ENCODE measurements at regions of chr1 and their contacts with region 1.

Region 1: GRCh38 chr1:205255941-205256780 is 28.4 kb downstream of the TMCC2 start:
- DNase-seq: peak; percentile 91
- H3K4me3 Mint-ChIP-seq: no peak overlapping the region
- H3K27ac Mint-ChIP-seq: no peak overlapping the region
- H3K4me1 Mint-ChIP-seq: no peaks in the 10 kb centered on the region
- H3K27me3 Mint-ChIP-seq: peaks cover 10% of the 10 kb centered on the region

Region 2: GRCh38 chr1:204915861-204916495 is 340.2 kb before region 1 on chr1:
- CTCF ChIA-PET with region 1: no interaction called
- DNase-seq: no peak
- H3K4me3 Mint-ChIP-seq: no peak overlapping the region
- H3K27ac Mint-ChIP-seq: no peak overlapping the region
- H3K4me1 Mint-ChIP-seq: no peaks in the 10 kb centered on the region
- H3K27me3 Mint-ChIP-seq: peaks cover 18% of the 10 kb centered on the region

Region 3: DNA sequence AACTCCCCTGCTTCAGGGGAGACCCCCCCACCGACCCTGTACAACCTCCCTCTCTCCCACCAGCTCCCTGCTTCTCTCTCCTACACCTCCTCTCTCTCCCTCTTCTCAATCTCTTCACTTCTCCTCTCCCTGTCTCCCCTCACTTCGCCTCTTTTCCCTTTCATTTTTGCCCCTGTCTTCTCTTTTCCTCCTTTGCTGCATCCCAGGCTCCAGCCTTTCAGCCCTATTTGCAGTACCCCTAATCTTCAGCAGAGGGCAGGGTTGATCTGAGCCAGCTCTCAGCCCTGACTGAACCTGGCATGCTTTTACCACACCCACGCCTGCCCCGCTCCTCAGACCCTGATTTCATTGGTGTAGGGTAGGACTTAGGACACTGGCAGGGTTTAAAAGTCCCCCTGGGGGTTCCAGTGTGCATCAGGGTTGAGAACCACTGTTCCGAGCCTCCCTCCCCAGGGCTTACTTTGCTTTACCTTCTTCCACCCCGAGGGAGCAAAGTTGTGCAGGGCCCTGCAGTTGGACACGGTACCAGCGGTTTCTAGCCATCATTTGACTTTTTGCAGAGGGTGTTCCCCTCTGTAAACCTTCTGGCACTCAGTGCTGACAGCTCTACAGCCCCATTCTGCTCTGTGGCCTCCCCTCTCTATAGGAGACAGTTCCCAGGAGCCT is 280.5 kb before region 1 on chr1:
- CTCF ChIA-PET with region 1: interaction called, 50 read pairs
- DNase-seq: peak; percentile 64
- H3K4me3 Mint-ChIP-seq: no peak overlapping the region
- H3K27ac Mint-ChIP-seq: no peak overlapping the region
- H3K4me1 Mint-ChIP-seq: no peaks in the 10 kb centered on the region
- H3K27me3 Mint-ChIP-seq: peaks cover 62% of the 10 kb centered on the region

Region 4: DNA sequence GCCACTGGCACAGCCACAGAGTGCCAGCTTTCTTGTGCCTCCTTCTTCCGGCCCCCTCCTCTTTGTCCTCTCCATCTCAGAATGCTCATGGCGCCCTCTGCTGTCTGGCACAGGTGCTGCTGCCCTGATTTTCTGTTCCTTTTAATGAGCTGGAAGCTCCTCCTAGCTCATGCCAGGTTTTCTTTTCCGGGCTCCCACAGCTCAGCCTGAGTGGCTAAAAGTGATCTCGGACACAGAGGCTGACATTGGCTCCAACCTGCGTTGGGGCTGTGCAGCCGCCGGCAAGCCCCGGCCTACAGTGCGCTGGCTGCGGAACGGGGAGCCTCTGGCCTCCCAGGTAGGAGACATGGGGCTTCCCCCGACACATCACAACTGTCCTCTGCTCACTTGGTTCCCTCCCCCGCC is 194.5 kb before region 1 on chr1:
- CTCF ChIA-PET with region 1: interaction called, 56 read pairs
- DNase-seq: peak; percentile 88
- H3K4me3 Mint-ChIP-seq: no peak overlapping the region
- H3K27ac Mint-ChIP-seq: no peak overlapping the region
- H3K4me1 Mint-ChIP-seq: no peaks in the 10 kb centered on the region
- H3K27me3 Mint-ChIP-seq: peaks cover 12% of the 10 kb centered on the region

Region 5: GRCh38 chr1:205227584-205228006 is 28.6 kb before region 1 on chr1 and contains the start of gene TMCC2:
- CTCF ChIA-PET with region 1: interaction called, 224 read pairs
- DNase-seq: peak; percentile 87
- H3K4me3 Mint-ChIP-seq: peak within 1 kb of the TSS; percentile 82
- H3K27ac Mint-ChIP-seq: peak within 1 kb of the TSS; percentile 3
- H3K4me1 Mint-ChIP-seq: peaks cover 35% of the 10 kb centered on the region
- H3K27me3 Mint-ChIP-seq: peaks cover 50% of the 10 kb centered on the region

Region 6: GRCh38 chr1:205243350-205244191 is 12.6 kb before region 1 on chr1:
- CTCF ChIA-PET with region 1: interaction called, 39 read pairs
- DNase-seq: no peak
- H3K4me3 Mint-ChIP-seq: no peak overlapping the region
- H3K27ac Mint-ChIP-seq: no peak overlapping the region
- H3K4me1 Mint-ChIP-seq: peaks cover 16% of the 10 kb centered on the region
- H3K27me3 Mint-ChIP-seq: peaks cover 9% of the 10 kb centered on the region

Region 7: DNA sequence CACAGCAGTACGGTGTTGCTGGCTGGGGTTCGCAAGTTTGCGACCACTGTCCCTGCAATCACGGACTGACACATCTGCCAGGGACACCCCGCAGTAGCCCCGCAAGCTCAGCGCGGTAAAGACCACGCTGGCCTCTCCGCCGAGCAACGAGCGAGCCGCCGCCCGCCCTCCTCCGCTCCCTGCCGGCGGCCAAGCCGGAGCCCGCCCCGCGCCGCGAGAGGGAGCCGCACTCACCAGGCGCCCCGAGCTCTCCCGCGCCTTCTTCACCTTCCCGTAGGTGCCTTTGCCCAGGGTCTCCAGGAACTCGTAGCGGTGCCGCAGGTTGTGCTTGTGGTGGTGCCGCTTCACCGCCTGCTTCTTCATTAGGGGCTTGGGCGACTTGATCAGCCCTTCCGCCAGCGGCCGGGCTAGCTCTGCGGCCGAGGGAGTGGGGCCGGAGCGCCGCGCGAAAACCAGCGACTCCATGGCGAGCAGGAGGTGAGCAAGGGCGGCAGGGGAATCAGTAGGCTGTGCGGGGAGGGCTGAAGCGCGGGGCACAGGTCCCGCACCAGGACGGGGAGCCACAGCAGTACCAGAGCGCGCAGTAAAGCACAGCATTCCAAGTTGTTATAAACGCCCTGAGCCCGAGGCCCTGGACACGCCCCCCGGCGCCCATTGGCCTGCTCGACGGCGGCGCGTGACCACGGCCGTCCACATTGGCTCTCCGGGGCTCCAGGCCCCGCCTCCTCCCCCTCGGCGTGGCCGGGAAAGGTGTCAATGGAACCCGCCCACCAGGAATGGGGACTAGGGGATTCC is 65.2 kb after region 1 on chr1 and contains the start of gene NUAK2:
- CTCF ChIA-PET with region 1: interaction called, 31 read pairs
- DNase-seq: peak; percentile 88
- H3K4me3 Mint-ChIP-seq: peak within 1 kb of the TSS; percentile 90
- H3K27ac Mint-ChIP-seq: peak within 1 kb of the TSS; percentile 87
- H3K4me1 Mint-ChIP-seq: peaks cover 65% of the 10 kb centered on the region
- H3K27me3 Mint-ChIP-seq: peaks cover 27% of the 10 kb centered on the region